Activated CD4-positive, alpha-beta T cell treated with anti-CD3 and anti-CD28 coated beads for 36 hours (primary cell): ENCODE measurements at regions of chr10 and their contacts with region 1.

Region 1: DNA sequence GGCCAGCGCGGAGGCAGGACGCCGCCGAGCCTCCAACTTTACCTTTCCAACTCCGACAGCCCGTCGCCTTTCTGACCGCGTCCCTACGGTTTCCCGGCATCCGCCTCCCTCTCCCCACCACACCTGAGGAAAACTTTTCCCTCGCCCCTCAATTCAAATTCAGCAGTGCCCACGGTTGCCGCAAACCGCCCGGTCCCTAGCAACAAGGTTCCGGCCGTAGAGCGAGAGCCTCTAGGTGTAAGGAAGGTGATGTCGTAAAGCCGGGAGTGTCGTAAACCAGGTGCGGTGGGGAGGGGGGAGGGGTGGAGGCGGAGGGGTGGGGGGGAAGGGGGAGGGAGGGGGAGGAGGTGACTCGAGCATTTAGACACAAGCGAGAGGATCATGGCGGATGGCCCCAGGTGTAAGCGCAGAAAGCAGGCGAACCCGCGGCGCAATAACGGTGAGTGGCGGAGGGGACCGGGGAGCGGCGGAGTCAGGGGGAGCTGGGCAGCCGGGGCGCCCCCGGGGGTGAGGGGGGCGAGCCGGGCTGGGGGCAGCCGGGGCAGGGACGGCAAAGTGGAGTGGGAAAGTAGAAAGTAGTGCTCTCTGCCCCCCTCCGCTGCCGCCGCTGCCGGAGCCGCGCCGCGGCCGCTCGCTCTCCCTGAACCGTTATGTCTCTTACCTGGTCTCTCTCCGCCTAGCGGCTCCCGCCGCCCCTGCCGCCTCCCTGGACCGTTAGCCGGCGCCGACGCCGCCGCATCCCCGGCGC is at the start of gene ZEB1:
- DNase-seq: peak; percentile 95
- ATAC-seq: peak; percentile 55
- H3K4me3 Mint-ChIP-seq: peak within 1 kb of the TSS; percentile 93
- H3K27ac Mint-ChIP-seq: peak within 1 kb of the TSS; percentile 99
- H3K4me1 Mint-ChIP-seq: peaks cover 39% of the 10 kb centered on the region
- H3K27me3 Mint-ChIP-seq: no peaks in the 10 kb centered on the region
- total RNA-seq, gene ZEB1: 32.0 to 49.0 TPM

Region 2: GRCh38 chr10:30701451-30702173 is 617.4 kb before region 1 on chr10:
- CTCF ChIA-PET with region 1: no interaction called
- POLR2A ChIA-PET with region 1: no interaction called
- intact Hi-C with region 1: loop called in 1 of 2 experiments (anchors 5 kb)
- DNase-seq: peak; percentile 93
- ATAC-seq: peak; percentile 73
- H3K4me3 Mint-ChIP-seq: peak overlapping the region; percentile 86
- H3K27ac Mint-ChIP-seq: peak overlapping the region; percentile 90
- H3K4me1 Mint-ChIP-seq: peaks cover 87% of the 10 kb centered on the region
- H3K27me3 Mint-ChIP-seq: no peaks in the 10 kb centered on the region

Region 3: DNA sequence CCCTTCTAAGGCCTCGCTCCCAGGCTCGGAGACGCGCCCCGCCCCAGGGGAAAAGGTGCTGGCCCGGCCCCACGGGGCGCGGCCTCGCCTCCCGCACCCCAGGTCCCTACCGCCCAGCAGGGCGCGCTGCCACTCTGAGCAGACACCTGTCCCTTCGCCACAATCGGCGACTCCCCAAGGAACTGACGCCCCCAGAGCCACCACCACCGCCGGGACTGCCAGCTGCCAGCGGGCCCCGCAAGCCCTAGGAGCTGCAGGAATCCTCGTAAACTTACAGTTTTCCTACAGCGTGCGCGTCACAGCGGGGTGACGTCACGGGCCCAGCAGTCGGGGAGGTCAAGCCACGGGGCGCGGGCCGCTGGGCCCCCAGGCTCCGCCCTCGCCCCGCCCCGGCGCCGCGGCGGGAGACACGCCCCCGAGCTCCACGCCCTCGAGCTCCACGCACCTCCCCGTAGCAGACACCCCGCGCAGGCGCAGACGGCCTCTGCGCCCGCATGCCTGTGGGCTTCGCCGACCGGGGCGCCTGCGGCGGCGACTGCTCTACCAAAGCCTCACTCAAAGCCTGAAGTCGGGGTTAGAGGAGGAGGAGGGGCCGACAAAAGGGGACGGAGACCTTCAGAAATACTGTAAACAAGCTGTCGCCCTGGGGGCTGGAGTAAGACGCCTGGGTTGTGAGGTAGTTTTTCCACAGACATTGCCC is 287.3 kb before region 1 on chr10 and contains the start of gene ZNF438:
- CTCF ChIA-PET with region 1: no interaction called
- POLR2A ChIA-PET with region 1: interaction called, 4 read pairs
- intact Hi-C with region 1: loop called (anchors 1 kb)
- DNase-seq: peak; percentile 96
- ATAC-seq: peak; percentile 81
- H3K4me3 Mint-ChIP-seq: peak within 1 kb of the TSS; percentile 81
- H3K27ac Mint-ChIP-seq: peak within 1 kb of the TSS; percentile 99
- H3K4me1 Mint-ChIP-seq: peaks cover 19% of the 10 kb centered on the region
- H3K27me3 Mint-ChIP-seq: no peaks in the 10 kb centered on the region
- total RNA-seq, gene ZNF438: 3.1 to 3.7 TPM

Region 4: DNA sequence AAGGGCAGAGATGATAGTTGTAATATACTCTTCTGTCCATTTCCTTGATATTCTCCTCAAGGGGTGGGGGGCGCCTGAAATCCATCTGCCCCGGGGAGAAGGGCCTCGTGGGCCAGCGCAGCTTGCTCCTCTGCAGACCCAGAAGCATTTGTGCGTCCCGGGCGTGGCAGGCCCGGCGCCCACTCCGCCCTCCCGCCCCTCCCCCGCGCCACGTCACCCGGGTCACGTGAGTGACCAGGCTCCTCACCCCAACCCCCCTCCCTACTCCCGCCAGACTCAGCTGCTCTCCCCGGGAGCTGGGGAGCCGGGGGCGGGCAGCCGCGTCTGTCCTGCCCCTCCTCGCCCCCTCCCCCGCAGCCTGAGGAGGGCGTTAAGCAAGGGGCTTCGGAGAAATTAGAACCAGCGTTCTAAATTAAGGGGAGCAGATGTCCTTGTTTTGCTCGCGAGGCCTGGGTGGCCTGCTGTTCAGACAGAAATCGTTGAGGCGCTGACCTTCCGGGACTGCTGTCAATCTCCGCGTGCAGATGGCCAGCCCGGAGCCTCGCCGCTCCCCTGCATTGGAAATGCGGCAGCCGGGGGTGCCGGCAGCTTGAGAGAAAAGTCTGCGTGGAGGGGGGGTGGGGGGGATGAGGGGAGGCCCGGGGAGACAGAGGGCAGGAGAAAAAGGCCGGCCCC is 185.3 kb before region 1 on chr10:
- CTCF ChIA-PET with region 1: no interaction called
- POLR2A ChIA-PET with region 1: no interaction called
- intact Hi-C with region 1: loop called in 1 of 2 experiments (anchors 5 kb)
- DNase-seq: peak; percentile 84
- ATAC-seq: peak; percentile 52
- H3K4me3 Mint-ChIP-seq: peak overlapping the region; percentile 75
- H3K27ac Mint-ChIP-seq: peak overlapping the region; percentile 55
- H3K4me1 Mint-ChIP-seq: peaks cover 42% of the 10 kb centered on the region
- H3K27me3 Mint-ChIP-seq: no peaks in the 10 kb centered on the region

Region 5: GRCh38 chr10:31242902-31243301 is 76.1 kb before region 1 on chr10:
- CTCF ChIA-PET with region 1: no interaction called
- POLR2A ChIA-PET with region 1: no interaction called
- intact Hi-C with region 1: no loop called
- DNase-seq: peak; percentile 78
- ATAC-seq: peak; percentile 95
- H3K4me3 Mint-ChIP-seq: no peak overlapping the region
- H3K27ac Mint-ChIP-seq: peak overlapping the region; percentile 17
- H3K4me1 Mint-ChIP-seq: peaks cover 16% of the 10 kb centered on the region
- H3K27me3 Mint-ChIP-seq: no peaks in the 10 kb centered on the region

Region 6: GRCh38 chr10:31419394-31420063 is 100.5 kb after region 1 on chr10:
- CTCF ChIA-PET with region 1: no interaction called
- POLR2A ChIA-PET with region 1: no interaction called
- intact Hi-C with region 1: loop called in 1 of 2 experiments (anchors 10 kb)
- DNase-seq: peak; percentile 20
- ATAC-seq: peak; percentile 58
- H3K4me3 Mint-ChIP-seq: no peak overlapping the region
- H3K27ac Mint-ChIP-seq: no peak overlapping the region
- H3K4me1 Mint-ChIP-seq: peaks cover 43% of the 10 kb centered on the region
- H3K27me3 Mint-ChIP-seq: no peaks in the 10 kb centered on the region

Region 7: DNA sequence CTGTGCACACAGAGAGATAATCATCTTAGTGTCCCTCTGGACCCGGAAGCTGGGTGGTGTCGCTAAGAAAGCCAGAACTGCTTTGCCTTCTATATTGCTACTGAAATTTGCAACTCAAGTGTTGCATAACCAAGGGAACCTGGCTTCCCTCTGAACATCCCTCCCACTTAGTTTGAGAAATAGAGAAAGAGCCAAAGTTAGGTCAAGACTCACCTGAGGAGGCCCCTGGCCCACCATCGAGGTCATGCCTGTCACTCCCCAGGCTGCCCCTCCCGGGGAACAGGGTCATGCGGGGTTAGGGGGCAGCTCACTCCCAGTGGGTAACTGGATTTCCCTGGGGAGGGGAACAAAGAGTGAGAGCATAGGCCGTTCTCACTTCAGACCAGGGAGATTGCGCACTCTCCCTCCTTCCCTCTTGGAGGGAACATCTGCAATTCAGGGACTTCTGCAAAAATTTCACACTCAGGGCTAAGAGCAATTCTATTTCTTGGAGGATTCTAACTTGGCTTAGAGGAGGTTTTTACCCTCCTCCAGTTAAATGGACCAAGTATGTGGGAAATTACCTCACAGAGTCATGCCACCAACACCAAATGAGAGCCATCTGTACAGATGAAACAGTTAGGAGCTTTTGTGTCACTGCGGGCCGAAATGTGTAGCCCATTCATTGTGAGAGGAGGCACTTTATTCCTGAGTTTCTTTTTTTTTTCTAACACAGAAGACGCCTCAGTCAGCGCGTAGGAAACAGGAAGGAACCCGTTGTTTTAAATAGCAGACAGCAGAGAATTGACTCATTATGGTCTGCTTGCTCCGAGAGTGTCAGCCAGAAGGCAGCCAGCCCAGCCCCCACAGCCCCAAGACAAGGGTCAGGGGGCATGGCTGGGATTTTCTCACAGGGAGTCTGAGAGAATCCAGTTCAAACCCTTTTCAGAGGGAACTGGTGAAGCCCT is 388.3 kb after region 1 on chr10:
- CTCF ChIA-PET with region 1: no interaction called
- POLR2A ChIA-PET with region 1: no interaction called
- intact Hi-C with region 1: loop called in 1 of 2 experiments (anchors 2 kb)
- DNase-seq: peak; percentile 81
- ATAC-seq: peak; percentile 95
- H3K4me3 Mint-ChIP-seq: no peak overlapping the region
- H3K27ac Mint-ChIP-seq: peak overlapping the region; percentile 83
- H3K4me1 Mint-ChIP-seq: peaks cover 24% of the 10 kb centered on the region
- H3K27me3 Mint-ChIP-seq: no peaks in the 10 kb centered on the region

Region 8: DNA sequence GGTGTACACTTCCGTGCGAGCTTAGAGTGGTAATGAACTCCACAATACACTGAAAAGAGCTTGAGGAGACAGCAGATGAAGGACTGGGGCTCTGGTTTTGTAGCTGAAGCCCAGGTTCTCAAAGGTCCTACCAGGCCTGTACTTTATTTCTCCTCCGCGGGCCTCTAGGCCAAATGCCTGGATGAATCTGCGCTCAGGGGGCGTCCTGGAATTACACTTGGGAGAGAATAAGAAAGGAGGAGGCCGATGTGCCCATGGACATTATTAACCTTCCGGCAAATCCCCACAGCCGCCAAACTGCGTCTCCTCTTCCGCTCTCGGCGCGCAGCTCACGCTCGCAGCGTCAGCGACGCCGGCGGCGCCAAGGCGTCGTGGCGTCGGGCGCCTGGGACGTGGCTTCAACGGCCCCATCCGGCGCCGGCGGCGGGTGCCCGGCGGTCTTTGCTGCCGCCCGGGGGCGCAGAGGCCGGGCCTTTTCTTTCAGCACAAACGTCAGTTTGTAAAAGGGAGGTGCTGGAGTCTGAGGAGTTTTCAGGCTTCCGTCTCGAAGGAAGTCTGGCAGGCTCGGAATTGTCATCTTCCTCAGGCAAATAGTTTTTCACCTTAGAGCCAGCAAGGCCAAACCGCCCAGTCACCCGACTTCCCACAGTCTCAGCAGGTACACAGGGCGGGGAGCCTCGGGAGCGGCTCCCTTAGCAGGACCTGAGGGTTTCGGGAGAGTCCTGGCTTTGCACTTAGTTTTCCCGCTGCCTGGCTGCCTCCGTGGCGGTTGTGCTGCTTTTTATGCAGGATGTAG is 1126.9 kb after region 1 on chr10 and contains the start of gene CCDC7:
- CTCF ChIA-PET with region 1: no interaction called
- POLR2A ChIA-PET with region 1: no interaction called
- intact Hi-C with region 1: loop called in 1 of 2 experiments (anchors 5 kb)
- DNase-seq: peak; percentile 91
- ATAC-seq: peak; percentile 97
- H3K4me3 Mint-ChIP-seq: peak within 1 kb of the TSS; percentile 82
- H3K27ac Mint-ChIP-seq: peak within 1 kb of the TSS; percentile 99
- H3K4me1 Mint-ChIP-seq: peaks cover 10% of the 10 kb centered on the region
- H3K27me3 Mint-ChIP-seq: no peaks in the 10 kb centered on the region
- total RNA-seq, gene CCDC7: 9.0 TPM